ENCODE measurements at regions of chr11 and their contacts with region 1.

Region 1: DNA sequence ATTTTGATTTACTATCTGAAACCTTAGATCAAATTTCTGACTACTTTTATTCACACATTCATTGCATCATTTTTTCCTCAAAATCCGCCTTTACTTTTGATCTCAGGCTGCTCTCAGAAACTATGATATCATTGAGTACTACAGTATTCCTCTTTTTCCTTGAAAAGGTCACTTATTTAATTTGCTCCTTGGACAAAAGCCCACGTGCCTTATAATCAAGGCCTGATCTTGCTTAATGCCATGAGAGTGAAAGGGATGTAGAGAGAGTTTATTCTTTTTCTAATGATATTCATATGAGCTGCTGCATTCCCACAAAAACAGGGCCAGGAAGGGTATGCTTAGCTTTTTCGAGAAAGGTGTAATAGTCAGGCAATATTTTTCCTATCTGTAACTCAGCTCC is 327.0 kb downstream of the ETS1 start:
- DNase-seq: no peak
- H3K4me3 ChIP-seq: no peak overlapping the region
- H3K27ac ChIP-seq: no peak overlapping the region
- H3K4me1 ChIP-seq: no peaks in the 10 kb centered on the region
- H3K27me3 ChIP-seq: no peaks in the 10 kb centered on the region
- CTCF ChIP-seq: no peak

Region 2: GRCh38 chr11:128240546-128240945 is 19.9 kb before region 1 on chr11:
- CTCF ChIA-PET with region 1: no interaction called
- POLR2A ChIA-PET with region 1: interaction called, 10 read pairs
- intact Hi-C with region 1: no loop called
- DNase-seq: no peak
- H3K4me3 ChIP-seq: no peak overlapping the region
- H3K27ac ChIP-seq: no peak overlapping the region
- H3K4me1 ChIP-seq: no peaks in the 10 kb centered on the region
- H3K27me3 ChIP-seq: no peaks in the 10 kb centered on the region
- CTCF ChIP-seq: no peak